ENCODE measurements at regions of chr22 and their contacts with region 1.

Region 1: GRCh38 chr22:19717691-19718455 is 3.6 kb downstream of the SEPTIN5 start:
- DNase-seq: peak in 1 of 2 donors; percentile 87
- H3K4me3 ChIP-seq: peak overlapping the region; percentile 85 to 87
- H3K27ac ChIP-seq: peak overlapping the region; percentile 78 to 80
- H3K4me1 ChIP-seq: peaks cover 13 to 31% of the 10 kb centered on the region in 2 donors
- H3K27me3 ChIP-seq: no peaks in the 10 kb centered on the region
- CTCF ChIP-seq: peak; percentile 89 to 97 (median 91)

Region 2: DNA sequence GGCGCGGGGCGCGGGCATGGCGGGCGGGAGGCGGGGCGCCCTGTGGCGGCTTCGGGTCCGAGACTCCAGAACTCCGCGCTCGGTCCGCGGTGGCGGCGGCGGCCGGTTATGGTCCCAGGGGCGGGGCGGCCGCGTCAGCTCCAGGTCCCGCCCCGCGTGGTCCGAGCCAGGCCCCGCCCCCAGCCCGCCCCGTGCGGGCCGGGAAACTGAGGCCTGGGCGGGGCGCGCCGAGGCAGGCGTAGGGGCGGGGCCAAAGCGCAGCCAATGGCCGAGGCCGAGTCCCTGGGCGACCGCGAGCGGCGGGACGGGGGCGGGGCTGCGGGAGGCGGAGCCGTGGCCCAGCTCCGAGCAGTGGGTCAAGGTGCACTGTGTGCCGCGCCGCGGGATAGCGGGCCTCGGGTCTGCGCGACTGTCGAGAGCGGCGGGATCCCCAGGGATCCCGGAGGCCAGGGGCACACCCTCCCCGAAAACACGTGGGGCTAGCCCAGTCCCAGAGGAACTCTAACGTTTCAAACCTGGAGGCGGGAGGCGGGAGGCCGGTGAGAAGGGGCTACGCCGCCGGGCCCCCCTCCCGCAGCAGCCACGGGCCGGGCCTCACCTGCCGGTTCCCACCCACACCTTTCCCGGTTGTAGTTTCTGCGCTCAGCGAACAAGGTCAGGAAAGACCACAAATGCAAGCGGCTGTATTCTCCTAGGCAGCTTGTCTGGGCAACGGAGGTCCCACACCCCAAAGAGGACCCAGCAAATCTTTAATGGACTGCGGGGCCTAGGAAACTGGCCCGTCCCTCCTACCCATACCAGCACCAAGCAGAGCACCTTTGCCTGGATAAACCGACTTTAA is 539.0 kb before region 1 on chr22 and contains the start of gene SLC25A1:
- intact Hi-C with region 1: loop called (anchors 5 kb)
- DNase-seq: peak; percentile 66 to 95
- H3K4me3 ChIP-seq: peak within 1 kb of the TSS; percentile 96 to 97
- H3K27ac ChIP-seq: peak within 1 kb of the TSS; percentile 92 to 93
- H3K4me1 ChIP-seq: peaks cover 6 to 29% of the 10 kb centered on the region in 2 donors
- H3K27me3 ChIP-seq: no peaks in the 10 kb centered on the region
- CTCF ChIP-seq: peak in 1 of 3 experiments; percentile 15
- total RNA-seq, gene SLC25A1: 89.3 TPM

Region 3: GRCh38 chr22:19432133-19432851 is 285.6 kb before region 1 on chr22 and contains the start of gene MRPL40:
- intact Hi-C with region 1: loop called (anchors 5 kb)
- DNase-seq: peak; percentile 56 to 94
- H3K4me3 ChIP-seq: peak within 1 kb of the TSS; percentile 66 to 99
- H3K27ac ChIP-seq: peak within 1 kb of the TSS; percentile 95 to 98
- H3K4me1 ChIP-seq: peaks cover 0 to 22% of the 10 kb centered on the region in 2 donors
- H3K27me3 ChIP-seq: no peaks in the 10 kb centered on the region
- CTCF ChIP-seq: no peak
- total RNA-seq, gene MRPL40: 14.7 TPM

Region 4: DNA sequence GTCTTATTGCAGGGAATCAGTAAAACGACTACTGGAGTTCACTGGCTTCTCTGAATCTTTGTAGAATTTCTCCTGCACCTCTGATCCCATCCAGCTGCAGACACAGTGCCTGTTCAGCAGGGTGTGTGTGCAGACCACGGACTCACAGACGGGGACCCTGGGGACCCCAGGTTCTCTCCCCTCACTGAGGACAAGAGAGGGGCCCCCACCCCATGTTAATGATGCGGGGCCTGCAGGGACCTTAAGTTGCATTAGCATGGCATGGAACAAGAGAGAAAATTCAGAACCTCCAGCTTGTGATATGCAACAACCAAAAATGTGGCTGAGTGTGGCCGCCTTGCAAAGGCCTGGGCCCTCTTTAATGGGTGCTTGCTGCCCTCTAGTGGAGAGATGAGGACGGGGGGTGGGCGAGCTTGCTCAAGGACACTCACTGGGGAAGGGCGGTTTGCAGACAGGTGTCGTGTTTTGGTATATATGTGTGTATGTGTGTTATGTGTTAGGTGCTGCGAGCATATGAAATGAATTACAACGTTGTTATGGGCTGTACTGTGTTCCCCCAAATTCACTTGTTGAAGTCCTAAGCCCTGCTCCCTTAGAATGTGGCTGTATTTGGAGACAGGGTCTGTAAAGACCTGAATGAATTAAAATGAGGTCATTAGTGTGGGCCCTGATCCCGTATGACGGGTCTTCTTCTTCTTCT is 88.0 kb before region 1 on chr22:
- intact Hi-C with region 1: loop called (anchors 10 kb)
- DNase-seq: peak in 1 of 2 donors; percentile 80
- H3K4me3 ChIP-seq: no peak overlapping the region
- H3K27ac ChIP-seq: no peak overlapping the region
- H3K4me1 ChIP-seq: no peaks in the 10 kb centered on the region
- H3K27me3 ChIP-seq: no peaks in the 10 kb centered on the region
- CTCF ChIP-seq: peak; percentile 73 to 88 (median 82)

Region 5: GRCh38 chr22:19730655-19731360 is 12.9 kb after region 1 on chr22:
- intact Hi-C with region 1: no loop called
- DNase-seq: peak in 1 of 2 donors; percentile 85
- H3K4me3 ChIP-seq: peak overlapping the region; percentile 28 to 56
- H3K27ac ChIP-seq: no peak overlapping the region
- H3K4me1 ChIP-seq: peaks cover 0 to 6% of the 10 kb centered on the region in 2 donors
- H3K27me3 ChIP-seq: no peaks in the 10 kb centered on the region
- CTCF ChIP-seq: peak; percentile 93 to 98 (median 96)

Region 6: GRCh38 chr22:19854778-19855503 is 137.1 kb after region 1 on chr22 and contains the starts of genes GNB1L and RTL10:
- intact Hi-C with region 1: loop called (anchors 2 kb)
- DNase-seq: peak; percentile 82 to 98
- H3K4me3 ChIP-seq: peak within 1 kb of the TSS; percentile 72 to 73
- H3K27ac ChIP-seq: peak within 1 kb of the TSS; percentile 91 to 94
- H3K4me1 ChIP-seq: peaks cover 14% of the 10 kb centered on the region in 2 donors
- H3K27me3 ChIP-seq: no peaks in the 10 kb centered on the region
- CTCF ChIP-seq: peak in 2 of 3 experiments; percentile 13 to 20
- total RNA-seq, gene GNB1L: 7.9 TPM
- total RNA-seq, gene RTL10: 8.8 TPM